Tibial artery (tissue), 4 donors: ENCODE measurements at regions of chr12 and their contacts with region 1.

Region 1: DNA sequence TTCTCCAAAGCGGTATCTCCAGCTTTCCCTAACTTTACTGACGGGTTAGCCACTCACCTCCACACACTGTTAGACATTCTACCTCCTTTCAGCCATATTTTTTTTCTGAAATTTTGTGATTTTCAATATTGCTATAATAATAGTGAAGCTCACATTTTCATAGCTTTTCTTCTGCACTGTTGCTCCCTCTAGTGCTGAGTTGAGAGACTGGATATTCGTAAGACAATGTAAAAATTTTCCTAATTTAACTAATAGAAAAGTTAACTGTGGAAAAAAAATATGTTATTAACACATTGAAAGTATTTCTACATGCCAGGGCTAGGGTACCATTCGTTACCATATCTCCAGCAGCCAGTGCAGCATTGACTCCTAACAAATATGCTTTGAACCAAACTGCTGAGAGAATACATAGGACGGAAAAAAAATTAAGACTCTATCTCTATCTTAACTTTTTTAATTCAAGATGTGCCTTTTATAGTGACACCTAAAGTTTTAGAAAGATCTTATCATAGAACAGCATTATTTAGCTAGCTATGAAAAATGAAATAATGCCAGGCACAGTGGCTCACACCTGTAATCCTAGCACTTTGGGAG is 48.7 kb upstream of the ABCC9 start:
- DNase-seq: no peak
- H3K4me3 ChIP-seq: no peak overlapping the region
- H3K27ac ChIP-seq: no peak overlapping the region
- H3K4me1 ChIP-seq: no peaks in the 10 kb centered on the region
- H3K27me3 ChIP-seq: peaks cover 0 to 2% of the 10 kb centered on the region in 2 donors
- CTCF ChIP-seq: peak; percentile 60 to 67

Region 2: GRCh38 chr12:21613931-21614330 is 376.0 kb before region 1 on chr12:
- intact Hi-C with region 1: no loop called
- DNase-seq: no peak
- H3K4me3 ChIP-seq: no peak overlapping the region
- H3K27ac ChIP-seq: no peak overlapping the region
- H3K4me1 ChIP-seq: peaks cover 0 to 23% (median 7%) of the 10 kb centered on the region in 4 donors
- H3K27me3 ChIP-seq: no peaks in the 10 kb centered on the region
- CTCF ChIP-seq: peak in 1 of 2 experiments; percentile 10

Region 3: DNA sequence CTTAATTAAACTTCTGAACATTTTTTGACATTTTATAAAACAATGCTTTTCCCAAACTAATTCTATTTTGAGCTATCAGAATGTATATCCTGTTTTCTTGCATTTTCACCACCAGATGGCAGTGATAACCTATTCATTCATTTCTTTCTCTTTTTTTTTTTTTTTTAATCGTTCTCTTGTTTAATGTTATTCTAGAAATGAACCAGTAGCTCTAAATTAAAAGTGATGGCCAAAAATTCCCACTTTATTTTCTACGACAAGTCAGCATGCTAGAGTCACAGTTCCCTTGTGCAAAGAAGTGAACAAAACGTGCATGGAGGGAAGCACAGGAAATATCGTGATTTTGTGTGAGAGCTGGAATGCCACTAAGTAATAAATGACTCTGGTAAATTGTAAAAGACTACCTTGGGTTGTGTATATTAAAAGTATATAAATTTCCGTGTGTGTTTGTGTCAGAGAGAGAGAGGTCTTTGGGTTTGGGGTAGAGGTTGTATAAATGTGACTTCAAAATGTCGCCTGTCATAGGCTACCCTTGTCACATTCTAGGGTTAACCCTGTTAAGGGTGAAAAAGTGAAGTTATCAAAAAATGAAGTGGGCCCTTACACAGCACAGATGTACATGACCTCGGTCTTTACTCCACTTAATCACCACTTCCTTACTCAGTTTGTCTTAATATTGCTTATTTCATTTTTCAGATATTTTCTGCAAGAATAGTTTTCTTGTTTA is 291.8 kb before region 1 on chr12:
- intact Hi-C with region 1: loop called (anchors 5 kb)
- DNase-seq: no peak
- H3K4me3 ChIP-seq: no peak overlapping the region
- H3K27ac ChIP-seq: no peak overlapping the region
- H3K4me1 ChIP-seq: peaks cover 0 to 27% (median 4%) of the 10 kb centered on the region in 4 donors
- H3K27me3 ChIP-seq: no peaks in the 10 kb centered on the region
- CTCF ChIP-seq: peak; percentile 52 to 74

Region 4: DNA sequence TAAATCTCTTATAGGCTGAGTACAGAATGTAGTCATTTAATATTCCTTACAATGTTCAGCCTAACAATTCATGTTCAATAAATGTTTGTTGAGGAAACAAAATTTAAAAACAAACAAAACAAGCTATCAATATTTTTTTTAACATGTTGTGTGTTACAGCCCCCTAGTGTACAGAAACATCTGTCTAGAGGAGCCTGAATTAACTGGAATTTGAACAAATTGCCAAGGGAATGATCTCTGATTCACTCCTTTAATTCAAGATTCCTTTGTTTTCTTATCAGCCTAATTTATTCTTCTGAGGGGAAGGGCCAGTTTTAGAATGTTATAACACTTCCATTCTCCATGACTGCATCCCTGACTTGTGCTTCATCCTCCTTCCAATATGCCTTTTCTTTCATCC is 183.3 kb after region 1 on chr12:
- intact Hi-C with region 1: no loop called
- DNase-seq: no peak
- H3K4me3 ChIP-seq: no peak overlapping the region
- H3K27ac ChIP-seq: no peak overlapping the region
- H3K4me1 ChIP-seq: no peaks in the 10 kb centered on the region
- H3K27me3 ChIP-seq: no peaks in the 10 kb centered on the region
- CTCF ChIP-seq: no peak

Region 5: DNA sequence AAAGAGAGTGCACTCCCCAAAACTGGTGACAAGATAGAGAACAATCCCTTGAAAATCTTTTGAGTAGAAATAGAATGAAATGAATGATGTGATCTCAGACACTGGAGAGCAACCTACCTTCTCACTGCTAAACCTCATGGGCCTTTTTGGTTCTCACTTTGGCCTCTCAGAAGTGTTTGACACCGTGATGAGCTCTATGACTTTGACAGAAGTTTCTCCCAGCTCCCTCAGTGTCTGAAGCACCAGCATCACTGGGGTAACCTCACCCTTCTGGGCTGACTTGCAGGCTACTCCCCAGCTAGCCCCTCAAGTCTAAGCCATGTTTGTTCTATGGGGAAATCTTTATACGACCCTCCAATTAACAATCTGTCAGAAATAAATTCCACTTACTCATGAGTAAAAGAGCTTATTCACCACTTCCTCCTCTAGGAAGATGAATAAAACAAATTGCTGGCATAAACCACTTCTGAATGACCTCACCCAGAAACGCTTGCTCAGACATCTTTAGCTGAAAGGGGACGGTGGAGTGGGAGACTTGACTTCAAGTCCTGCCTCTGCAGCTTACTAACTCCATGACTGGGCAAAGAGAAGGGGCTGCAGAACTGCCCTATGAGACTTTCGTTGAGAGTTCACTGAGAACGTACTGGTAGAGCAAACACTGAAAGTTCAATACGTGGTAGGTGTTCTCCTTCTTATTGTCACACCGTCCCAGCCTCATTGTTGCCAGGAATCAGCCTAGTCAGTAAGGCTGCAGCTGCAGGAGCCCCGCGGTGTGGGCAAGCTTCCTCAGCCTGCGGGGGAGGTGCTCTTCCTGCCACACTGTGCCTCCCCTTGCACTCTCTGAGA is 298.1 kb after region 1 on chr12:
- intact Hi-C with region 1: no loop called
- DNase-seq: no peak
- H3K4me3 ChIP-seq: no peak overlapping the region
- H3K27ac ChIP-seq: no peak overlapping the region
- H3K4me1 ChIP-seq: peaks cover 0 to 7% (median 6%) of the 10 kb centered on the region in 4 donors
- H3K27me3 ChIP-seq: no peaks in the 10 kb centered on the region
- CTCF ChIP-seq: no peak